MCF 10A (cell line): ENCODE measurements at regions of chr3 and their contacts with region 1.

Region 1: GRCh38 chr3:153161138-153161713 is 800 bp upstream of the RAP2B start:
- DNase-seq: peak; percentile 100
- H3K4me3 Mint-ChIP-seq: peak overlapping the region; percentile 77
- H3K27ac Mint-ChIP-seq: peak overlapping the region; percentile 92
- H3K4me1 Mint-ChIP-seq: peaks cover 23% of the 10 kb centered on the region
- H3K27me3 Mint-ChIP-seq: no peaks in the 10 kb centered on the region
- CTCF ChIP-seq: no peak

Region 2: DNA sequence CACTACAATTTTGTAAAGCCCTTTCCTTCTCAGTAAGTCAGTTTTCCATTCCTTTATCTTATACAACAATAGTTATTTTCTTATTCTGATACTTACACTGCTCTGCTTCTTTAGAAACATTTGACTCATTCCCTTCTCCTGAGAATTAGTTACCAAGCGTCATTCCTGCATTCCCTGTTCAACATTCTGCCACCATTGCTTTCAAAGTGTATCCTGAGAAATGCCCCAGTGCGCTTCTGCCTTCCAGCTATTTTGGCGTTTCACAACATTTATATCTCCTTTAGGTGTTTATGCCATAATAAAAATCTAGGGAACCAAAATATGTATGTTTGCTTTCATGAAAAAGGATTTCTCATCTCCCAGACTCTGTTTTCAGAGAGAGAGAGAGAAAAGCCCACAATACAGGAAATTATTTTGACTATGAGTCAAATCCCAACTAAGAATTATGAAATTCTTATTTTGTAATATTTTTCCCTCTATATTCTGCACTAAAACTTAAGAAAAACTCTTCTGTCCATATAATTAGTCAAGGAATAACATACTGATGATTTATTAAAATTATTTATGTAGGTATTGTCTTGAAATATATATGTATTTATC is 117.4 kb before region 1 on chr3:
- CTCF ChIA-PET with region 1: interaction called, 41 read pairs
- POLR2A ChIA-PET with region 1: interaction called, 182 read pairs
- intact Hi-C with region 1: loop called (anchors 1 kb)
- DNase-seq: peak; percentile 86
- H3K4me3 Mint-ChIP-seq: peak overlapping the region; percentile 63
- H3K27ac Mint-ChIP-seq: peak overlapping the region; percentile 82
- H3K4me1 Mint-ChIP-seq: peaks cover 8% of the 10 kb centered on the region
- H3K27me3 Mint-ChIP-seq: no peaks in the 10 kb centered on the region
- CTCF ChIP-seq: no peak

Region 3: DNA sequence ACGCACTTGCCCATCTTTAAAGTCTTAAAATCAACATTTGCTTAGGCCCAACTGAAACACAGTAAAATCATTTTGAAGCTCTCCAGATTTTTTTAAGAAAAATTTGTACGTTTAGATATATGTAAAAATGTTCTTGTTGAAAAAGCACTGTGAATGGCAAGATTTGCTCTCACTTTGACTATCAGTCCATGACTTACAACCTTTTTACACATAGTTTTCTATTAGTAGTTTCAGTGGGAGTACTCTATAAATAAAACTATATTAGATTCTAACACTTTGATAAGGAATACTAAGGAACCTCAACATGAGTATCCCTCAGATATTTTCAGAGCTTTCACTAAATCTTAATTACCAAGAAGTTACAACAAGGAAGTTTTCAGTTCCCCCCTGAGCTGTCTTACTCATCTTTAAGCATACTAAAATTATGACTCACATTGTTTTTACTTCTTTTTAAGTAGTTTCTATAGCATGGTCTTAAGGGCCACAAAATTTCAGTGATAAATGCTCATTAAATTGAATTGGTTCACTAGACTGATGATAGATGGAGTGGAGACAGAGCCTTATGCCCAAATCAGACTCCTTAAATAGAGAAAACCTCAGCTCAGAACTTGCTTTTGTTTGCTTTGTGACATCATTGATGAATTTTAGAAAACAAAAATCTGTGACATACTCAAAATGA is 30.8 kb before region 1 on chr3:
- CTCF ChIA-PET with region 1: interaction called, 4 read pairs
- POLR2A ChIA-PET with region 1: interaction called, 52 read pairs
- intact Hi-C with region 1: no loop called
- DNase-seq: peak; percentile 66
- H3K4me3 Mint-ChIP-seq: no peak overlapping the region
- H3K27ac Mint-ChIP-seq: peak overlapping the region; percentile 81
- H3K4me1 Mint-ChIP-seq: peaks cover 5% of the 10 kb centered on the region
- H3K27me3 Mint-ChIP-seq: no peaks in the 10 kb centered on the region
- CTCF ChIP-seq: no peak

Region 4: DNA sequence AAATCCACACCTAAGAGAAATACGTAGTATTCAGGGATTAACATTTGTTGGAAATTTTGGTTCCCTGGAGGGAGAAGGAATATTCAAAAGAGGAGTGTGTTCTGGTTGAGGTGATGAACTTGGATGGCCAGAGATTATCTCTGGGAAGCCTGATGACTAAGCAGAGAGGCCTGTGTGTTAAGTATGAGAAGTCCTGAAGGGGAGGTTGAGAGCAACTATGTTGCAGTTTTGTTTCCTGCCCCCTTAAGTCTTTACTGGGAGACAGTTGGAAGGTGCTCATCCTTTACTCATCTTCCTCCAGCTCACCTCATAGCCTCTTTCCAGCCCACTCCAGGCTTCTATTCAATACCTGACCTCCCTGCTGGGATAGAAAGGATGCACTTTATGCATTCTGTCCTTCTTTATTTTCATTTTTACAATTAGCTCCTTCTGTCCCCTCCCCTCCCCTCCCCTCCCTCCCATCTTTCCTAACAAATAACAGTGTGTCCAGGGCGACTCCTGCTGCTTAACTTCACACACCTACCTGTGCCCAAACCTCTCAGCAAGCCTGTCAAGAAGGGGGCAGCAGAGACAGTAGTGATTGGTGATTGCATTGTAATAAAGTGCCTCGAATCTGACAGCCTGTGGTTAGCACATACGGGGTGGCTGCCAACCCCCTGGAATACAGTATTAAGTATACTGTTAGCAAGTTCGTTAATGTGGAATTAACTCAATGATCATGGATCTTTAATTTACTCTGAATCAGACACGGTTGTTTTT is 12.7 kb after region 1 on chr3:
- CTCF ChIA-PET with region 1: no interaction called
- POLR2A ChIA-PET with region 1: interaction called, 40 read pairs
- intact Hi-C with region 1: no loop called
- DNase-seq: peak; percentile 39
- H3K4me3 Mint-ChIP-seq: no peak overlapping the region
- H3K27ac Mint-ChIP-seq: no peak overlapping the region
- H3K4me1 Mint-ChIP-seq: no peaks in the 10 kb centered on the region
- H3K27me3 Mint-ChIP-seq: no peaks in the 10 kb centered on the region
- CTCF ChIP-seq: no peak

Region 5: DNA sequence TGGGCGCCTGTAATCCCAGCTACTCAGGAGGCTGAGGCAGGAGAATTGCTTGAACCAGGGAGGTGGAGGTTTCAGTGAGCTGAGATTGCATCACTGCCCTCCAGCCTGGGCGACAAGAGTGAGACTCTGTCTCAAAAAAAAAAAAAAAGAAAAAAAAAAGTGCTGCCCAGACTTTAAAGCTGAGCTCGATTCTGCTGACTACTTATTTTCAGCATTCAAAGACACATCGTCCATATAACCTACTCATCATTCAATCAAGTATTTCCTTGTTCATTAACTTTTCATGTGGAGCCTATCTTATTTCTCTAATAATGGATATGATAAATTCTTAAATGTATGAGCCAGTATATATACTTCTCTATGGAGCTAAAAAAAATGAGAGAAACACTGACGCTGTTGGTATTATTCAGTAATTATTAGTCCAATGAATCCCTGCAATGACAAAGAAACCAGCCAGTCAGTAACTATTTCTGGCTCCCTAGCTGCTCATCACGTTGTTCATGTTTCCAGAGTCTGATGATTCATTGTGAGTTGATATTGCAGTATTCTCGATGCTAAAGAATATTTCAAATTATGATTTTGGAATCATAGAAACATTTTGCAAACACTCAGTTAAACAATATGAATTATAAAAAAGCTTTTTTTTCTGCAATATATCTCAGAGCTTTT is 112.7 kb after region 1 on chr3:
- CTCF ChIA-PET with region 1: no interaction called
- POLR2A ChIA-PET with region 1: interaction called, 10 read pairs
- intact Hi-C with region 1: no loop called
- DNase-seq: peak; percentile 41
- H3K4me3 Mint-ChIP-seq: no peak overlapping the region
- H3K27ac Mint-ChIP-seq: no peak overlapping the region
- H3K4me1 Mint-ChIP-seq: no peaks in the 10 kb centered on the region
- H3K27me3 Mint-ChIP-seq: no peaks in the 10 kb centered on the region
- CTCF ChIP-seq: no peak

Region 6: DNA sequence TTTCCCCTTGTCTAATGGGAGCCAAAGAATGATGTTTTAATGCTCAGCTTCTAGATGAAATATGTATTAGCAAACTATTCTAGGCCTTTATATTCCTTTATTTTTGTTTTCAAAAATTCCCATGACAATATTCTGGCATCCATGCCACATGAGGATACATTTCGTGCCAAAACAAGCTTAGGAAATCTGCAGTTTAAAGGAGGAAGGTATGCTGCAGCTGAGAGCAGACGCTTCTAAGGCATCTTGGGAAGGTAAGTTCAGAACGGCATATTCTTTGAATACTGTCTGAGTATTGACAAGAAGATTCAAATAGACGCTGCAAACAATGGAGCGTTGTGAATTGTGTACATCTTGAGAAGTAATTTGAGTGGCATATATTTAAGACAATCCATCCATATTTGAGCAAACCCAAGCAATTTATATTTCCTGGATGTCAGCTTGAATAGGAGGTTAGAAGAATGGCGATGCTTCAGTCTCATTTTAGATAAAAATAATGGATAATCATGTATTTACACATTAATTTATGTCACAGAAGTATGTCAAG is 159.4 kb after region 1 on chr3:
- CTCF ChIA-PET with region 1: no interaction called
- POLR2A ChIA-PET with region 1: no interaction called
- intact Hi-C with region 1: no loop called
- DNase-seq: no peak
- H3K4me3 Mint-ChIP-seq: no peak overlapping the region
- H3K27ac Mint-ChIP-seq: no peak overlapping the region
- H3K4me1 Mint-ChIP-seq: peaks cover 5% of the 10 kb centered on the region
- H3K27me3 Mint-ChIP-seq: no peaks in the 10 kb centered on the region
- CTCF ChIP-seq: no peak

Region 7: GRCh38 chr3:153373606-153374005 is 212.4 kb after region 1 on chr3:
- CTCF ChIA-PET with region 1: interaction called, 3 read pairs
- POLR2A ChIA-PET with region 1: interaction called, 4 read pairs
- intact Hi-C with region 1: loop called (anchors 5 kb)
- DNase-seq: peak; percentile 13
- H3K4me3 Mint-ChIP-seq: no peak overlapping the region
- H3K27ac Mint-ChIP-seq: no peak overlapping the region
- H3K4me1 Mint-ChIP-seq: peaks cover 19% of the 10 kb centered on the region
- H3K27me3 Mint-ChIP-seq: no peaks in the 10 kb centered on the region
- CTCF ChIP-seq: no peak

Region 8: DNA sequence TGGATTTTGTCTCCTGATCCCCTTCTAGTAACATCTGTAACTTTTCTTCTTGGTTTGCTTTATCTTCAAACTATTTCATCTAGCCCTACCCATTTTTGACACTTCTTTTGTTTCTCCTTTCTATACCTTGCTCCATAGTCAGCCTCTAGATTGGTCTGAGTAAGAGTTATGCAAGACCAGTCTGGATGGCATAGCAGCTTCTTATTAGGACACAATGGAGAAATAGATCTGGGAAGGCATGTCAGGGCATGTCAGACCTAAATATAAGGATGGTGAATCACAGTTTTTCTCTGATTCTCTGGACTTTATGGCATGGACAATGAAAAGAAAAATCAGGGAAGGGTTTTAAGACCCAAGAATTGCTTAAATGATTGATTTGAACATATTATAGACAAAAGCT is 453.3 kb after region 1 on chr3:
- CTCF ChIA-PET with region 1: no interaction called
- POLR2A ChIA-PET with region 1: interaction called, 29 read pairs
- intact Hi-C with region 1: loop called (anchors 5 kb)
- DNase-seq: peak; percentile 96
- H3K4me3 Mint-ChIP-seq: no peak overlapping the region
- H3K27ac Mint-ChIP-seq: peak overlapping the region; percentile 94
- H3K4me1 Mint-ChIP-seq: peaks cover 15% of the 10 kb centered on the region
- H3K27me3 Mint-ChIP-seq: no peaks in the 10 kb centered on the region
- CTCF ChIP-seq: no peak